Sigmoid colon (tissue), 7 donors: ENCODE measurements at regions of chr2 and their contacts with region 1.

Region 1: GRCh38 chr2:134431838-134432434 is 178.1 kb downstream of the MGAT5 start:
- DNase-seq: no peak
- H3K4me3 ChIP-seq: no peak overlapping the region
- H3K27ac ChIP-seq: no peak overlapping the region
- H3K4me1 ChIP-seq: no peaks in the 10 kb centered on the region
- H3K27me3 ChIP-seq: no peaks in the 10 kb centered on the region
- CTCF ChIP-seq: no peak
- EP300 ChIP-seq: no peak
- POLR2A ChIP-seq: no peak

Region 2: DNA sequence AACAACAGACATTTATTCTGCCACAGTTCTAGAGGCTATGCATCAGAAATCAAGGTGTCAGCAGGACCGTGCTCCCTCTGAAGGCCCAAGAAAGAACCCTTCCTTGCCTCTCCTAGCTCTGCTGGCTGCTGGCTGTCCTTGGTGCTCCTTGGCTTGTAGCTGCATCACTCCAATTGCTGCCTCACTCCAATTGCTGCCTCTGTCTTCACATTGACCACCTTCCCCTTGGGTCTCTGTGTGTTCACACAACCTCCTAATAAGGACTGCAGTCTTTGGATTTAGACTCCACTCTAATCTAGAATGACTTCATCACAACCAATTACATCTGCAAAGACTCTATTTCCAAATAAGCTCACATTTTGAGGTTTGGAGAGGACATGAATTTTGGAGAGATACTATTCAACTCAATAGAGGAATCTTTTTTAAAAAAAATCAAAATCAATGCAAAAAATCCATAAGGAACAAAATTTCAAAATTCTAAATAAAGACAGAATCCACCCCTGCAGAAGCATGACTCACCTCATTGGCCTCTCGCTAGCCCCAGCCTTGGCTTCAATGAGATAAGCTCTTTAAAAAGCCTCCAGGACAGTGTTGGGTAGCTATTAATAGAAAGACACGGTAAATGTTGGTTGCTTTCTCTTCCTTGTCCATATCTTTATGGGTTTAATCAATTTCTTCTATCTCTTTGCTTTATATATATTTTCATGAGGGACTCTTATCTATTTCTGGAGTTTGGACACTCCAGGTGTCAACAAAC is 445.7 kb before region 1 on chr2:
- intact Hi-C with region 1: loop called (anchors 10 kb)
- DNase-seq: no peak
- H3K4me3 ChIP-seq: no peak overlapping the region
- H3K27ac ChIP-seq: no peak overlapping the region
- H3K4me1 ChIP-seq: no peaks in the 10 kb centered on the region
- H3K27me3 ChIP-seq: no peaks in the 10 kb centered on the region
- CTCF ChIP-seq: no peak
- EP300 ChIP-seq: no peak
- POLR2A ChIP-seq: no peak

Region 3: GRCh38 chr2:134549104-134549503 is 117.2 kb after region 1 on chr2:
- intact Hi-C with region 1: no loop called
- DNase-seq: no peak
- H3K4me3 ChIP-seq: no peak overlapping the region
- H3K27ac ChIP-seq: no peak overlapping the region
- H3K4me1 ChIP-seq: no peaks in the 10 kb centered on the region
- H3K27me3 ChIP-seq: no peaks in the 10 kb centered on the region
- CTCF ChIP-seq: no peak
- EP300 ChIP-seq: no peak
- POLR2A ChIP-seq: no peak